ENCODE measurements at regions of chr6 and their contacts with region 1.

Region 1: GRCh38 chr6:36442671-36443470 is at the starts of genes KCTD20 and PXT1:
- DNase-seq: peak; percentile 86
- ATAC-seq: peak; percentile 90
- H3K4me3 ChIP-seq: peak within 1 kb of the TSS; percentile 78 to 93 (median 93)
- H3K27ac ChIP-seq: peak within 1 kb of the TSS; percentile 94
- H3K4me1 ChIP-seq: peaks cover 51% of the 10 kb centered on the region
- H3K27me3 ChIP-seq: no peaks in the 10 kb centered on the region; a peak in 1 of 5 replicates
- CTCF ChIP-seq: peak; percentile 32
- EP300 ChIP-seq: peak; percentile 48 to 70; a peak in 2 of 4 replicates
- POLR2A ChIP-seq: peak; percentile 89 to 92
- RAD21 ChIP-seq: peak; percentile 66
- total RNA-seq, gene KCTD20: 67.1 and 103 TPM in 2 replicates
- total RNA-seq, gene PXT1: not detected in 2 replicates

Region 2: DNA sequence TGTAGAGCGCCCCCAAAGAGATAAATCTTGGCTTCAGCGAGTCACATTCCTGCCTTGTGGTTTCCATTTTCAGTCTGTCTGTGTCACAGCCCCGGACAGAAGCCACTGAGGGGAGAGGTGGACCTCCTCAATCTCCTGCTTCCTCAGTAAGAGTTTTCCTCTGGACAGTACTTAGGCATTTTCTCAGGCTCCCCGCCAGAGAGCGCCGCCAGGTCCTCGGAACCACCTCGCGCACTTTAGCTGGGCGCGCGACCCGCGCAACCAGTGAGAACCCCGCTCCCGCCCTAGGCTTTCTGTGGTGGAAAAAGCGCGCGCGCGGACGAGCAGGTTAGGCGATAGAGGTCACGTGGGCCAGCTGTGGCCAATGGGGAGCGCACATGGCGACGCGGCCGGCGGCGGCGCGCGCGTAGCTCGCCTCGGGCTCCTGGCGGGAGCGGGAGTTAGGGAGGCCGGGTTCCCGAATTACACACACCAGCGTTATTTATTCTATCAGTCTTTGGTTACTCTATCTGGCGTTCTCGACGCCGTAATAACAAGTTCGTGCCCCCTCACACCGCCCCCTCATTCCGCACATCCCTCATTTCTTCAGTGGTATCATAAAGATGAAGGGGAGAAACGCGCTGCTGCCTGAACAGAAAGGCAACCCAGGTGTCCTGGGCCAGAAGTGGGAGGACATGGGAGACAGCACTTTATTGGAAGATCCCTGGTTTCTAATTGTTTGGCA is 19.6 kb before region 1 on chr6:
- CTCF ChIA-PET with region 1: interaction called, 13 read pairs
- POLR2A ChIA-PET with region 1: interaction called, 23 read pairs
- in situ Hi-C with region 1: no loop called
- intact Hi-C with region 1: loop called (anchors 1 kb)
- DNase-seq: peak; percentile 98
- ATAC-seq: peak; percentile 94
- H3K4me3 ChIP-seq: peak overlapping the region; percentile 64 to 72 (median 71)
- H3K27ac ChIP-seq: peak overlapping the region; percentile 62
- H3K4me1 ChIP-seq: peaks cover 41% of the 10 kb centered on the region
- H3K27me3 ChIP-seq: peaks cover 0 to 4% of the 10 kb centered on the region in 2 experiments; a peak in 1 of 5 replicates
- CTCF ChIP-seq: peak; percentile 98
- EP300 ChIP-seq: no peak
- POLR2A ChIP-seq: peak; percentile 43 to 75; a peak in 3 of 4 replicates
- RAD21 ChIP-seq: peak; percentile 92

Region 3: GRCh38 chr6:36428911-36429310 is 14.0 kb before region 1 on chr6:
- CTCF ChIA-PET with region 1: interaction called, 13 read pairs
- POLR2A ChIA-PET with region 1: interaction called, 23 read pairs
- in situ Hi-C with region 1: no loop called
- intact Hi-C with region 1: no loop called
- DNase-seq: no peak
- ATAC-seq: peak; percentile 69
- H3K4me3 ChIP-seq: no peak overlapping the region
- H3K27ac ChIP-seq: no peak overlapping the region
- H3K4me1 ChIP-seq: peaks cover 45% of the 10 kb centered on the region
- H3K27me3 ChIP-seq: no peaks in the 10 kb centered on the region
- CTCF ChIP-seq: peak; percentile 69
- EP300 ChIP-seq: no peak
- POLR2A ChIP-seq: no peak
- RAD21 ChIP-seq: 0 out of 2 replicates have a peak, but pooled peaks have one; percentile 43

Region 4: DNA sequence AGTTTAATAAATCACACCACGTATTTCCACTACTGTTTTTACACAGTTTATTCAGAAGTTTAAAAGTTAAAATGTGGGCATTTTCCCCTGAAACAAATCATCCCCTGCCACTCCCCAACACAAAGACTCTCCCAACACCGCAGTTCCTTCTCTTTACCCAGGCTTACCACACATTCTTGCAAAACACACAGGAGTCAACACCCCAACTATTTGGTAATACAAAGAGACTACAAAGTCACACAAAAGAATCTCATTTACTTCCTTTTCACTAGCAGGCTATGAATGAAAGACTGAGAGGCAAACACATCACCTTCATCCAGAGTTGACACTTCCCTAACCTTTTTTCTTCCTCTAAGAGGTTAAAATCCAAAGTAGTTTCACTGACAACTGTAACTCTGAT is 51.0 kb after region 1 on chr6:
- CTCF ChIA-PET with region 1: no interaction called
- POLR2A ChIA-PET with region 1: no interaction called
- in situ Hi-C with region 1: no loop called
- intact Hi-C with region 1: no loop called
- DNase-seq: peak; percentile 88
- ATAC-seq: peak; percentile 71
- H3K4me3 ChIP-seq: no peak overlapping the region
- H3K27ac ChIP-seq: peak overlapping the region; percentile 36
- H3K4me1 ChIP-seq: peaks cover 41% of the 10 kb centered on the region
- H3K27me3 ChIP-seq: no peaks in the 10 kb centered on the region
- CTCF ChIP-seq: no peak
- EP300 ChIP-seq: peak in 1 of 2 experiments; percentile 78; a peak in 2 of 4 replicates
- POLR2A ChIP-seq: no peak
- RAD21 ChIP-seq: no peak

Region 5: DNA sequence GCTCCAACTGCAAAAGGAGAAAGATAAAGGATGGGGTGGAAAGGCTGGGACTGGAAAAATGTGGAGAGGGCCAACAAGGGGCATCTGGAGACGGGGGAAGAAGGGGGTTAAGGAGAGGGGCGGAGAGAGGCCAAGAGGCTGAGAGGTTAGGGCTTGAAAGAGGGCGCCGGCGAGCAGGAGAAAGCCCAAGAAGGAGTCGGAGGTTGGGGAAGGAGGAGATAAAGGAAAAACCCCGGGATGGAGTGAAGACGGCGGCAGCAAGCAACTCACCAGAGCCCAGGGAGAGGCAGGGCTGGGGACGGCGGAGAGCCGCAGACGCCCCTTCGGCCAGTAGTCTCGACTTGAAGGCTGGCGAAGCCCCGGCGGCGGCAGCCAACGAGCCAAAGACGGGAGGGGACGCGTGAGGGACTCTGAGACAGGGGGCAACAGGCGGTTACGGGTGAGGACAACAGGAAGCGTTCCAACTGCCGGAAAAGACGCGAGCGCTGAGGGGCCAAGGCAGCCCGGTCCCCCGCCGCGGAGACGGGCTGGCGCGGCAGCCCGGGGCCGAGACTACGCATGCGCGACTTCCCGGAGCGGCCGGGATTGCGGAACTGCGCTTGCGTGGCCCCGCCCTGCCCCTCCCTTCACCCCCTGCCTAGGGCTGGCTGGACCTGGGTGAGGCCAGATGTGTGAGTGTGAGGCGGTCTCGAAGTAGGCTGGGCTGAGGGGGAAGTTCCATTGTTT is 104.2 kb after region 1 on chr6 and contains the start of gene STK38:
- CTCF ChIA-PET with region 1: no interaction called
- POLR2A ChIA-PET with region 1: interaction called, 5 read pairs
- in situ Hi-C with region 1: no loop called
- intact Hi-C with region 1: loop called (anchors 5 kb)
- DNase-seq: peak; percentile 84
- ATAC-seq: peak; percentile 93
- H3K4me3 ChIP-seq: peak within 1 kb of the TSS; percentile 85 to 100 (median 88)
- H3K27ac ChIP-seq: peak within 1 kb of the TSS; percentile 71
- H3K4me1 ChIP-seq: peaks cover 43% of the 10 kb centered on the region
- H3K27me3 ChIP-seq: peaks cover 0 to 1% of the 10 kb centered on the region in 2 experiments; a peak in 3 of 5 replicates
- CTCF ChIP-seq: peak; percentile 58
- EP300 ChIP-seq: no peak
- POLR2A ChIP-seq: peak; percentile 88 to 99
- RAD21 ChIP-seq: 0 out of 2 replicates have a peak, but pooled peaks have one; percentile 16
- total RNA-seq, gene STK38: 20.7 and 25.5 TPM in 2 replicates

Region 6: DNA sequence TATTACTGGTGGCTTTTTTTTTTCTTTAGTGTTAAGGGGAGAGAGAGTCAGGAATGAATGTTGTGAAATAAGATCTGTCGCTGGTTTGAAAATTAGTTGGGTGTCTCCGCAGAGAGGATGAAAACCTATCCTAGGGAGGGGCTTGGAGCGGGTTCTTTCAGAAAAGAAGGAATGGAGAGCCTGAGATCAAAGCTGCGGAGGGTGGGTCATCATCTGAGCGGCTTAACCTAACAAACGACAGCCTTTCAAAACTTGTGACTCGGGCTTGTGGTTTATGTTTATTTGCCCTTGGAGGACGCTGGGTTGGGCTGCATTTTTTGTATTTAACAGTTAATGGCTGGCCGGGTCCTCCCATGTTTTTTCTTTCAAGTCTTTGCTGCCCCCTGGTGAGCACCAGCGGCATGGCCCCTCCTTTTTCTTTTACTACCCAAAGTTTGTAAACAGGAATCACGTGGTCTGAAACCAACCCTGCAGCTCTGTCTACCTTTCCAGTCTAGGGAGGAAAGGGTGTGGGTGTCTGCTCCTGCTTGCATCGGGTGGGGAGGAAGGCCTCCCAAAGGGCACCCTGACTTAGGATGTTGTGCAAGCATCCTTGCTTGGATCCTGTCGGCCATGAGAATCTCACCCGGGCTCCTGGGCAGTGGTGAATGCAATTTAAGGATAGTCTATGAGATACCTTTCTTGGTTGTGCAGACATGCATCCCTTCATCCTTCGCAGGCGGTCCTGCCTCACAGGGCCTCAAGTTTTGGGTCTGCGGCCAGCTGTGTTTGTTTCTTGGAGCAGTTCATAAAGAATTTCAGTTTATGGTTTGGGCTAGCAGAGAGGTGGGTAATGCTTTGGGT is 729.3 kb after region 1 on chr6:
- CTCF ChIA-PET with region 1: no interaction called
- POLR2A ChIA-PET with region 1: no interaction called
- in situ Hi-C with region 1: no loop called
- intact Hi-C with region 1: no loop called
- DNase-seq: peak; percentile 100
- ATAC-seq: peak; percentile 52
- H3K4me3 ChIP-seq: peak overlapping the region; percentile 98 to 100 (median 99)
- H3K27ac ChIP-seq: peak overlapping the region; percentile 91
- H3K4me1 ChIP-seq: peaks cover 46% of the 10 kb centered on the region
- H3K27me3 ChIP-seq: no peaks in the 10 kb centered on the region; a peak in 1 of 5 replicates
- CTCF ChIP-seq: peak; percentile 94
- EP300 ChIP-seq: peak in 1 of 2 experiments; percentile 94; a peak in 2 of 4 replicates
- POLR2A ChIP-seq: 0 out of 4 replicates have a peak, but pooled peaks of 1 of the 2 experiments have one; percentile 24
- RAD21 ChIP-seq: peak; percentile 99

Measured in HepG2 (cell line).